Left cardiac atrium (tissue), 4 donors: ENCODE measurements at regions of chr1 and their contacts with region 1.

Region 1: GRCh38 chr1:67685067-67685557 is at the start of gene GADD45A:
- DNase-seq: peak; percentile 99
- ATAC-seq: peak; percentile 91 to 93
- total RNA-seq, gene GADD45A: 14.0 to 15.8 TPM

Region 2: GRCh38 chr1:67323087-67323486 is 362.0 kb before region 1 on chr1:
- intact Hi-C with region 1: no loop called
- DNase-seq: no peak
- ATAC-seq: no peak

Region 3: GRCh38 chr1:67561704-67562113 is 123.4 kb before region 1 on chr1:
- intact Hi-C with region 1: loop called in 1 of 2 experiments (anchors 10 kb)
- DNase-seq: peak; percentile 91
- ATAC-seq: peak; percentile 69 to 77

Region 4: DNA sequence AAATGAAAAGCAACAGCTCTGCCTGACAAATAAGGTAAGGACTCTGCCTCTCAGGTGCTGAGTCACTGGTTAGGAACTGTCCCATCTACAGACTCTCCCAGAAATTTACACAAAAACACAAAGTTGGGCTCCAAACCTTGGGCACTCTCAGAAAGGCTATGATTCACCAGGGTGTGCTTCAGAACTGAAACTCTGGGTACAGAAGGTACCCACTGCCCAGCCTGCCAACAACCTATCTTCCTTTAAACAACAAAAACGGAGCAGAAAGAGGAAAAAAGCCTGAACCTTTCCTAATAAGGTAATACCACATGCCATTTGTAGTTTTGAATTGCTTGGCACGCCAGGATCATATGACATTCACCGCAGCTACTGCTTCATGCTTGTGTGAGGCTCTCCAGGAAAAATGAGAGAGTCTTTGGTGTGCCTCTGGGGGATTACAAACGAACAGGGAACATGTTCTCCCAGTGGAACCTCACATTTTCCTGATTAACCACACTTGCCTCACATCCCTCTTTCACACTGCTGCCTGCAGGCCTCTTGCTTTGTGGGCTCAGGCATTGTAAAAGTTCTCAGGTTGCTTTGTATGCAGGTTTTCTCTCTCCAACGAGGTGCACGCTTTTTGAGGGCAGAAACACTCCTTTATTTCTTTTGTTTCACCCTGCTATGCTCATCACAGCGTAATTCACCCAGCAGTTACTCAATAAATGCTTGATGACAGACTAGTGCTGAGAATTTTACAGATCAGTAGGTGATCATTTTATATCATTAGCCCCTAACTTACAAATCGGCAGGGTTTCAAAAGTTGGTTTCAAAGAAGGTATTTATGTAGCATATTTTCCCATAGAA is 65.0 kb after region 1 on chr1:
- intact Hi-C with region 1: loop called in 1 of 2 experiments (anchors 5 kb)
- DNase-seq: no peak
- ATAC-seq: peak; percentile 23 to 65

Region 5: DNA sequence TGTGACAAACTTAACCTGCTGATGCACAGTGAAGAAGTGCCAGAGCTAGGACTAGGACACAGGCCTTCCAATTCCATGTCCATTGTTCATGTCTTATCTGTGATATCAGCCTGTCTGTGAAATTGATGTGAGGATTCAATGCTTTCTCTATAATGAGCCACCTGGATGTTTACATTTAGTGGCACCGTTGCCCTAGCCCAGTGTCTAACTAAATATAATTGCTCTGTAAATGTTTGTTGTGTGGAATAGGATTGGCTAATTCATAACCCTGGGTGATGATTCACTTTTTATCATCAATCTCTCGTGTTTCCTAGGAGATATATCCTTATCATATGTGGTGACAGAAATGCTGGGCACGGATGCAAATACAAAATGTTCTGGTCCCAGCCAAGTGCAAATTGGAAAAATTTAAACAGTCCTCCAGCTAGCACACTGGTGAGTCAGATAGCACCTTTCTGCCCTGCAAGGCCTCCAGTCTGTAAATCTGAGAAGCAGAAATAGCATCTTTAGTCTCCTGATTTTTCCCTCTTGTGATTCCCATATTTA is 195.0 kb after region 1 on chr1:
- intact Hi-C with region 1: no loop called
- DNase-seq: no peak
- ATAC-seq: peak; percentile 50 to 97